ENCODE measurements at regions of chr9 and their contacts with region 1.

Region 1: DNA sequence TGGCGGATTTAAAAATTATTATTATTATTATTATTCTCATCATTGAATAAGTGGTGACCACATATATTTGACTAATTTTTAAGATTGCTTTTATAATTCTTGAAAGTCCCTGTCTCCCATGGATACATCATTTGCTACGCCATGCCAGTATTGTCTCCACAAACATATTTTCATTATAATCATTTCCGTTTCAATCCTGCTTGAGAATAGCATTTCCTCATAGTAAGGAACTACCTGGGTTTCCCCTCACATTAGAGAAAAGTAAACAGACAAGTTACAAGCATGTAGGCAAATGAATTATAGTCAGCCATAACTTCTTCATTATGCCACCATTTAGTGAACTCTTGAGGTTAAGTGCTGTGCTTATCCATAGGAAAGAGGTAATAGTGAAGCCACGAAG is 276.6 kb downstream of the NFIB start:
- DNase-seq: no peak
- H3K4me3 ChIP-seq: no peak overlapping the region
- CTCF ChIP-seq: no peak

Region 2: GRCh38 chr9:13252852-13253251 is 784.5 kb before region 1 on chr9:
- in situ Hi-C with region 1: no loop called
- DNase-seq: no peak
- H3K4me3 ChIP-seq: no peak overlapping the region
- CTCF ChIP-seq: no peak

Region 3: GRCh38 chr9:14071484-14071883 is 34.2 kb after region 1 on chr9:
- in situ Hi-C with region 1: loop called (anchors 5 kb)
- DNase-seq: no peak
- H3K4me3 ChIP-seq: no peak overlapping the region
- CTCF ChIP-seq: no peak

Measured in astrocyte of the cerebellum (primary cell).